Activated B cell treated with CpG ODN at 0.5 μM for 24 hours (primary cell): ENCODE measurements at regions of chr9 and their contacts with region 1.

Region 1: GRCh38 chr9:93003552-93004407 is 54.7 kb upstream of the SUSD3 start:
- DNase-seq: no peak
- ATAC-seq: peak; percentile 83
- H3K4me3 Mint-ChIP-seq: no peak overlapping the region
- H3K27ac Mint-ChIP-seq: peak overlapping the region; percentile 30
- H3K4me1 Mint-ChIP-seq: peaks cover 18% of the 10 kb centered on the region
- H3K27me3 Mint-ChIP-seq: no peaks in the 10 kb centered on the region
- CTCF ChIP-seq: no peak

Region 2: DNA sequence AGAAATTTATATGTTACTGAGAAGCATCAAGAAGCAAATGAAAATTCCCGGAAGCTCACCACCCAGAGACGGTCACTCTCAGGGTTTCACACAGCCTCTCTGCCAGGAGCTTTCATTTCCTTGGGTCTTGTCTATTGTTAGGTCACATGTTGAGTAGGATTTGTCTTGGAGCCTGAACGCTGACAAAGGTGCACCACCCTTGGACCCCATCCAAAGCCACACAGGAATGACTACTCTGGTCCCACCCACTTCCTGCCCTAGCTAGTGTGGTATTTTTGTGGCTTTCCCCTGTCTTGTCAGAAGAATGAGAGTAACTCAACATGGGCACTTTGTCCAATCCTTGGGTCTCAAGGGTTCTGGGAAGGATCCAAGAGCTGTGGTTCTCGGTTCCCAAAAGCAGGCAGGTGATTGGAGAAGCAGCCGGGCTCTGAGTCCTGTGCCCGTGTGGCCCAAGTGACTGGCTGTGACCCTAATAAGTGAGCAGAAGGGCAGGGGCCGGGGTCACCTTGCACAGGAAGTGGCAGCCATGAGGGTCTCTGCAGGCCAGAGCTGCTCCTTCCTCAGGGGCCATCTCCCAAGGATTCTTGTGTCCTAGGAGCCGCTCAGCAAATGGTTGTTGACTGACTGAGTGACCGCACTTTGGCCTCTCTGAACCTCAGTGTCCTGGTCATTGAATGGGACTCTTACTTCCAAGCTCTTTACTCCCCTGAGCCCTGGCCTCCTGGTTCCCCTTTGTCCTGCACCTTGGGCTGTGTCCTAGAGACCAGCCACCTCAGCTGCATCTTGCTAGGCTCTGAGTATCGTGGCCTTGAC is 49.5 kb before region 1 on chr9:
- CTCF ChIA-PET with region 1: interaction called, 9 read pairs
- POLR2A ChIA-PET with region 1: interaction called, 4 read pairs
- intact Hi-C with region 1: loop called (anchors 5 kb)
- DNase-seq: no peak
- ATAC-seq: peak; percentile 66
- H3K4me3 Mint-ChIP-seq: peak overlapping the region; percentile 49
- H3K27ac Mint-ChIP-seq: no peak overlapping the region
- H3K4me1 Mint-ChIP-seq: peaks cover 20% of the 10 kb centered on the region
- H3K27me3 Mint-ChIP-seq: peaks cover 17% of the 10 kb centered on the region
- CTCF ChIP-seq: no peak

Region 3: DNA sequence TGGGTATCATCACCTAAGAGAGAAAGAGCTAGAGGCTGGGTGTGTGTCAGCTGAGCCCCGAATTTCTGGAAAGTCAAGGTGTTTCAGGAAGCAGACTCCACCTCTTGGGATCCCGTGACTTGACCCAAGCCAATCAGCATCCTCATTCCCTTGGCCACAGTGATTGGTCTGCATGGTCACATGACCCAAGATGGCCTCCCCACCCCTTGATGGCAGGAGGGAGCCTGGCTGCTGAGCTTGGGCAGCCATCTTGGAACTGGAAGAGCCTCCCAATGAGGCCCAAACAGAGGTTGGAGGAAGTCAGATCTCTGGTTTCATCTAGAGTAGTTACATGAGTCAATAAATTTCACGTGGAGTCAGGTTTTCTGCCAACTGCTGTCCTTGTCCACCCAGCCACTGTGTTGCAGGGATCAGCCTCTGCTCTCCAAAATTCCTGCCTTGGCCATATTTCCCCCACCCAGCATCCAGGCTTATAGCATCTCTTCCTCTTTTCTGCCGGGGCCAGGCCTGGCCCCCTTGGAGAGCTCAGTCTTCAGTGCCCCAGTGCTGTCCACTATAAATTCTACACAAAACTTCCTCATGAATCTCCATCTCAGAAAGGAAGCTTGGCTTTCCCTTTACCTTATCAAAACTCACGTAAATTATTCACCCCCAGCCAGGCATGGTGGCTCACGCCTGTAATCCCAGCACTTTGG is 37.5 kb after region 1 on chr9:
- CTCF ChIA-PET with region 1: no interaction called
- POLR2A ChIA-PET with region 1: no interaction called
- intact Hi-C with region 1: loop called (anchors 5 kb)
- DNase-seq: no peak
- ATAC-seq: no peak
- H3K4me3 Mint-ChIP-seq: no peak overlapping the region
- H3K27ac Mint-ChIP-seq: no peak overlapping the region
- H3K4me1 Mint-ChIP-seq: peaks cover 41% of the 10 kb centered on the region
- H3K27me3 Mint-ChIP-seq: no peaks in the 10 kb centered on the region
- CTCF ChIP-seq: no peak

Region 4: DNA sequence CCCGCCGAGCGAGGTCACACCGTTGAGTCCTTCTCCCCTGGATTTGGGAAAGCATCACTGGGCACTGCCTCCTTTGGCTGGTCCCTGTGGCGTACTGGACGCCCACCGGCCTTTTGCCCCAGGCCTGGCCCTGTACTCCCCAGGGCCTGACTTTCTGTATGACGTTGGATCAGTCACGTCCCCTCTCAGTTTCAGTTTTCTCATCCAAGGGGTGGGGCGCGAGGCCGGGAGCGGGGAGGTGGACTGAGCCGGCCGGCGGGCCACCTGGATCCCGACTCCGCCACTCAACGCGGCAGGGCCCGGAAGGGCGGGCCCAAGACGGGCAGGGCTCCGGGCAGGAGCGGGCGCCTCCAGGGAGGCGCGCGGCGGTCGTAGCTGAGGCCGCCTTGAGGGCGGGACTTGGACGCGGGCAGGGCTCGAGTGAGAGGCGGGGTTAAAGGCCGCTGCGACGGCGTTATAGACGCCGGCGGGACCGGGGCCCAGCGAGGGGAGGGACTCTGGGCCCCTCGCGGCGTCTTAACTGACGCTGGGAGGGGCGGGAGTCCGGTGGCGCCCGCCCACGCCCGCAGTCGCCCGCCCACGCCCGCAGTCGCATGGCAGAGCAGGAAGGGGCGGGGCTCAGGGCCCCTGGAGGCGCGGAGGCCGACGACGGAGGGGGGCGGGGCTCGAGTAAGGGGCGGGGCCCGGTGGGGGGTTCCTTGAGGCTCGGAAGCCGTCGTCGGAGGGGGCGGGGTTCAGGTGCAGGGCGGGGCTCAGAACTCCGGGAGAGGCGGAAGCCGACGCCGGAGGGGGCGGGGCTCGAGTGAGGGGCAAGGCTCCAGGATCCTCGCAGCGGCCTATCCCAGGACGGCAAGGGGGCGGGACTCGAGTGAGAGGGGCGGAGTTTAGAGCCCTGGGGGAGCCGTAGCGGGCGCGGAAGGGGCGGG is 91.7 kb after region 1 on chr9:
- CTCF ChIA-PET with region 1: interaction called, 3 read pairs
- POLR2A ChIA-PET with region 1: interaction called, 3 read pairs
- intact Hi-C with region 1: loop called (anchors 2 kb)
- DNase-seq: peak; percentile 100
- ATAC-seq: peak; percentile 79
- H3K4me3 Mint-ChIP-seq: peak overlapping the region; percentile 86
- H3K27ac Mint-ChIP-seq: peak overlapping the region; percentile 99
- H3K4me1 Mint-ChIP-seq: peaks cover 83% of the 10 kb centered on the region
- H3K27me3 Mint-ChIP-seq: no peaks in the 10 kb centered on the region
- CTCF ChIP-seq: no peak

Region 5: DNA sequence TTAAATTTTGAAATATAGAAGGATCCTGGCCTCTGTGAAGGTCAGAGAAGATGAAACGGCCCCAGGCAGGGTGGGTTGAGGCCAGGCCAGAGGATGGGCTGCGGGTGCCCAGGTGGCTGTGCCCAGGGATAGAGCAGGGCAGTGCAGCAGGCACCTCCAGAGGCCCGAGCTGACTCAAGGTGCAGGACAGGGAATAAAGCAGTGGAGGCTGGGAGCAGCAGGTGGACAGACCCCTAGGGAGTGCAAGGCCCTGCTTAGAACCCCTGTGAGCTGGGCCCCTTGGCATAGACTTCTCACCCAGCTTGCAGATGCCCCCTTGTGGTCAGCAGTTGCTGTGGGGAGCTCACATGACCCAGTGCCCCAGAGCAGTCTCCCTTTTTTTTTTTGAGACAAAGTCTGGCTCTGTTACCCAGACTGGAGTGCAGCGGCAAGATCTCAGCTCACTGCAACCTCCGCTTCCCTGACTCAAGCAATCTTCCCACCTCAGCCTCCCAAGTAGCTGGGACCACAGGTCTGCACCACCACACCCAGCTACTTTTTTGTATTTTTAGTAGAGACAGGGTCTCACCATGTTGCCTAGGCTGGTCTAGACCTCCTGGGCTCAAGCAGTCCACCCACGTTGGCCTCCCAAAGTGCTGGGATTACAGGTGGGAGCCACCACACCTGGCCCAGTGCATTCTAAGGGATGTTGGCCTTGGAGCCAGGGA is 298.9 kb after region 1 on chr9:
- CTCF ChIA-PET with region 1: interaction called, 7 read pairs
- POLR2A ChIA-PET with region 1: no interaction called
- intact Hi-C with region 1: loop called (anchors 1 kb)
- DNase-seq: peak; percentile 44
- ATAC-seq: peak; percentile 94
- H3K4me3 Mint-ChIP-seq: no peak overlapping the region
- H3K27ac Mint-ChIP-seq: no peak overlapping the region
- H3K4me1 Mint-ChIP-seq: no peaks in the 10 kb centered on the region
- H3K27me3 Mint-ChIP-seq: peaks cover 4% of the 10 kb centered on the region
- CTCF ChIP-seq: no peak